CD8-positive, alpha-beta memory T cell (primary cell): ENCODE measurements at regions of chr10 and their contacts with region 1.

Region 1: GRCh38 chr10:99620713-99621453 is 644 bp upstream of the SLC25A28 start:
- DNase-seq: peak; percentile 78 to 97 (median 89)
- H3K4me3 ChIP-seq: peak overlapping the region; percentile 83
- H3K4me3 Mint-ChIP-seq: peak overlapping the region; percentile 82 to 94 (median 89)
- H3K27ac ChIP-seq: peak overlapping the region; percentile 95
- H3K27ac Mint-ChIP-seq: peak overlapping the region; percentile 85 to 99 (median 97)
- H3K4me1 ChIP-seq: peaks cover 26% of the 10 kb centered on the region
- H3K4me1 Mint-ChIP-seq: peaks cover 43 to 54% (median 49%) of the 10 kb centered on the region in 3 donors
- H3K27me3 ChIP-seq: no peaks in the 10 kb centered on the region
- H3K27me3 Mint-ChIP-seq: no peaks in the 10 kb centered on the region

Region 2: DNA sequence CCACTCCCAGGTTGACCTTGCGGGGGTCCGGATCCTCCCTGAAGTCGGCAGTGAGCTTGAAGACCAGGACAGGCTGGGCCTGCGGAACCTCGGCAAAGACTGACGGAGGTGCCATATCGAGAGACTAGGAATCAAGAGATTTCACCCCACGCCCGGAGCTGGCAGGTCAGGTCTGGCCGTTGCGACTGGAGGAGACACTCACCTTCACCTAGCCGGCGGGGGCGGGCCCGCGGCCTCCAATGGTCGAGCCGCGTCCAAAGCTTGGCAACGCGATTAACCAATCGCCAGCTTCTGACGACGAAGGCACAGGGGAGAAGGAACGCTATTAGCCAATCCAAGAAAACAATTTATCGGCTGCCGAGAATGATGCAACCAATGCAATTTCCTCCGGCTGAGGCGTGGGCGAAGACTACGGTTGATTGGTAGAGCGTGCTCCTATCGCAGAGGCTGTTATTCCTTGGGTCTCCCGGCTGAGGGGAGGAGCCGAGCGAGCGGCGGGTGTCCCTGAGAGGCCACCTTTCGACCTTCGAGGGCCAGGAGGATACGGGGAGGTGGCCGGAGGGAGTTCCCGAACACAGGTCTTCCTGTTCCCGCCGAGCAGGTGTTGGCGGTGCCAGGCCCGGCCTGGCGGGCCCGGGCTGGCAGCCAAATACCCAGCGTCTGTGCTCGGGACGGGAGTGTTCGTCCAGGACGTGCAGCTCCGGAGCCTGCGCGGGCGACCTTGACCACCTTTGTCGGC is 190.3 kb before region 1 on chr10 and contains the start of gene GOT1:
- CTCF ChIA-PET with region 1: no interaction called
- POLR2A ChIA-PET with region 1: interaction called, 14 read pairs
- DNase-seq: peak; percentile 88 to 95 (median 94)
- H3K4me3 ChIP-seq: peak within 1 kb of the TSS; percentile 89
- H3K4me3 Mint-ChIP-seq: peak within 1 kb of the TSS; percentile 93 to 99 (median 98)
- H3K27ac ChIP-seq: peak within 1 kb of the TSS; percentile 79
- H3K27ac Mint-ChIP-seq: peak within 1 kb of the TSS; percentile 91 to 98 (median 96)
- H3K4me1 ChIP-seq: peaks cover 18% of the 10 kb centered on the region
- H3K4me1 Mint-ChIP-seq: peaks cover 33 to 48% (median 43%) of the 10 kb centered on the region in 3 donors
- H3K27me3 ChIP-seq: no peaks in the 10 kb centered on the region
- H3K27me3 Mint-ChIP-seq: peaks cover 0 to 4% of the 10 kb centered on the region in 2 donors
- total RNA-seq, gene GOT1: 32.9 to 33.4 TPM

Region 3: GRCh38 chr10:99659031-99659867 is 38.4 kb after region 1 on chr10 and contains the start of gene ENTPD7:
- CTCF ChIA-PET with region 1: no interaction called
- POLR2A ChIA-PET with region 1: interaction called, 12 read pairs
- DNase-seq: peak; percentile 72 to 88 (median 85)
- H3K4me3 ChIP-seq: peak within 1 kb of the TSS; percentile 82
- H3K4me3 Mint-ChIP-seq: peak within 1 kb of the TSS; percentile 86 to 96 (median 89)
- H3K27ac ChIP-seq: peak within 1 kb of the TSS; percentile 58
- H3K27ac Mint-ChIP-seq: peak within 1 kb of the TSS; percentile 49 to 91 (median 86)
- H3K4me1 ChIP-seq: peaks cover 14% of the 10 kb centered on the region
- H3K4me1 Mint-ChIP-seq: peaks cover 20 to 39% (median 29%) of the 10 kb centered on the region in 3 donors
- H3K27me3 ChIP-seq: no peaks in the 10 kb centered on the region
- H3K27me3 Mint-ChIP-seq: peaks cover 6 to 14% of the 10 kb centered on the region in 2 donors
- total RNA-seq, gene ENTPD7: 7.4 to 8.3 TPM

Region 4: GRCh38 chr10:99732033-99732912 is 111.4 kb after region 1 on chr10 and contains the starts of genes COX15 and CUTC:
- CTCF ChIA-PET with region 1: interaction called, 3 read pairs
- POLR2A ChIA-PET with region 1: interaction called, 17 read pairs
- DNase-seq: peak; percentile 94 to 96 (median 94)
- H3K4me3 ChIP-seq: peak within 1 kb of the TSS; percentile 98
- H3K4me3 Mint-ChIP-seq: peak within 1 kb of the TSS; percentile 97 to 100 (median 100)
- H3K27ac ChIP-seq: peak within 1 kb of the TSS; percentile 91
- H3K27ac Mint-ChIP-seq: peak within 1 kb of the TSS; percentile 90 to 100 (median 99)
- H3K4me1 ChIP-seq: peaks cover 18% of the 10 kb centered on the region
- H3K4me1 Mint-ChIP-seq: peaks cover 42 to 63% (median 62%) of the 10 kb centered on the region in 3 donors
- H3K27me3 ChIP-seq: no peaks in the 10 kb centered on the region
- H3K27me3 Mint-ChIP-seq: peaks cover 0 to 2% of the 10 kb centered on the region in 2 donors
- total RNA-seq, gene COX15: 35.8 to 36.5 TPM
- total RNA-seq, gene CUTC: 26.7 to 27.5 TPM